ENCODE measurements at regions of chr17 and their contacts with region 1.

Region 1: GRCh38 chr17:3738562-3739295 is 15.0 kb downstream of the HASPIN start:
- DNase-seq: peak; percentile 60
- H3K4me3 Mint-ChIP-seq: no peak overlapping the region
- H3K27ac Mint-ChIP-seq: peak overlapping the region; percentile 33
- H3K4me1 Mint-ChIP-seq: peaks cover 40% of the 10 kb centered on the region
- H3K27me3 Mint-ChIP-seq: no peaks in the 10 kb centered on the region

Region 2: DNA sequence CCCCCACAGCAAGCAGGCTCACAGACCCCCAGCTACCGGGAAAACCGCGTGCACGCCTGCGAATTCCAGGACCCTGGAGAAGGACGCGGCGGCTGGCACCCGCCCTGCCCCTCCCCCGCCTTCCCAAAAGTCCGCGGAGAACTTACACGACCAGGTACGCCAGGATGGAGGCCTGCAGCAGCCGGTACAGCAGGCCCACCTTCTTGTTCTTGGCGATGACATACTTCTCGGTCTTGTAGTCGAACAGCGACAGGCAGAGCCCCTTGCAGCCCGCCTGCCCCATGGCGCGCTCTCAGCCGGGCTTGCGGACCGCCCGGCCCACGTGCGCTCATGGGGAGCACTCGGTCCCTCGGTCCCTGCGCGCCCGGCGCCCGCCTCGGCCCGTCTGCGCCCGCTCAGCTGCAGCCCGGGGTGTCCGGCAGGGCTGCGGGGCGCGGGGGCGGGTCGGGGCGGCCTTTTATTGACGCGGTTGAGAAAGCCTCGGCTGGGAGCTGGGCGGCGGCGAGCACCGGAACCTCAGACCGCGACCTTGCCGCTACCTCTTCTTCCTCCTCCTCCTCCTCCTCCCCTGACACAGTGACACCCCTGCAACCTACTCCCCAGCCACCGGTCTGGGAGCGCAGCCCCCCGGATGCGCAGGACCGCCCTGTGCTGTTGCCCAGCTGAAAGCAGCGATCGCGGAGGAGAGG is 42.9 kb before region 1 on chr17 and contains the start of gene P2RX5:
- CTCF ChIA-PET with region 1: interaction called, 21 read pairs
- POLR2A ChIA-PET with region 1: no interaction called
- DNase-seq: peak; percentile 55
- H3K4me3 Mint-ChIP-seq: peak within 1 kb of the TSS; percentile 85
- H3K27ac Mint-ChIP-seq: peak within 1 kb of the TSS; percentile 91
- H3K4me1 Mint-ChIP-seq: peaks cover 33% of the 10 kb centered on the region
- H3K27me3 Mint-ChIP-seq: no peaks in the 10 kb centered on the region
- total RNA-seq, gene P2RX5: 33.6 to 39.4 TPM

Region 3: DNA sequence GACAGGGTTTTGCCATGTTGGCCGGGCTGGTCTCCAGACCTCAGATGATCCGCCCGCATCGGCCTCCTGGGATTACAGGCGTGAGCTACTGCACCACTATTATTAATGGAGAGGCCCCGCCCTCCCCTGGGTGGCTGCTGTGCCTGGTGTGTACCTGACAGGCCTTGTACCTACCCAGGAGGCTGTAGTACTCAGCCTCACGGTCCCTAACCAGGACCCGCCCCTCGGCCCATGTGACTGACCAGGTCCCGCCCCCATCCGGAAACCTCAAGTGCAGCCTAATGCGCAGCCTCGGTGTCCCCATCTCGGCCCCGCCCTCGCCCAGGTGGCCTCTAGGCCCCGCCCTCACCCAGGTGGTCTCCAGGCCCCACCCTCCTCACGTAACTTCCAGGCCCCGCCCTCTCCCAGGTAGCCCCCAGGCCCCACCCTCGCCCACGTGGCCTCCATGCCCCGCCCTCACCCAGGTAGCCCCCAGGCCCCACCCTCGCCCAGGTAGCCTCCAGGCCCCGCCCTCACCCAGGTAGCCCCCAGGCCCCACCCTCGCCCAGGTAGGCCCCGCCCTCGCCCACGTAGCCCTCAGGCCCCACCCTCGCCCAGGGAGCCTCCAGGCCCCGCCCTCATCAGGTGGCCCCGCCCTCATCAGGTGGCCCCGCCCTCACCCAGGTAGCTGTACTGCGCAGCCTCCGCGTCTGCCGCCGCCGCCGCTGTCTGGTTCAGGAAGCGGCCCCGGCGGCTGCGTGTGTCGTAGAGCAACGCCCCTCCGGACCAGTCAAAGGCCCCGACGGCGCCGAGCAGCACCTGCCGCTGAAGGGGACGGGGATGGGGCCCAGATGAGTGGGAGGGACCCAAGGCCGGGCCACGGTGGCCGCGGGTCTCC is 16.0 kb after region 1 on chr17:
- CTCF ChIA-PET with region 1: interaction called, 42 read pairs
- POLR2A ChIA-PET with region 1: interaction called, 3 read pairs
- DNase-seq: peak; percentile 67
- H3K4me3 Mint-ChIP-seq: no peak overlapping the region
- H3K27ac Mint-ChIP-seq: no peak overlapping the region
- H3K4me1 Mint-ChIP-seq: peaks cover 39% of the 10 kb centered on the region
- H3K27me3 Mint-ChIP-seq: no peaks in the 10 kb centered on the region

Region 4: GRCh38 chr17:3796110-3796821 is 57.5 kb after region 1 on chr17:
- CTCF ChIA-PET with region 1: interaction called, 10 read pairs
- POLR2A ChIA-PET with region 1: interaction called, 3 read pairs
- DNase-seq: peak; percentile 67
- H3K4me3 Mint-ChIP-seq: no peak overlapping the region
- H3K27ac Mint-ChIP-seq: peak overlapping the region; percentile 27
- H3K4me1 Mint-ChIP-seq: peaks cover 35% of the 10 kb centered on the region
- H3K27me3 Mint-ChIP-seq: no peaks in the 10 kb centered on the region

Region 5: GRCh38 chr17:3827124-3827773 is 88.5 kb after region 1 on chr17:
- CTCF ChIA-PET with region 1: interaction called, 82 read pairs
- POLR2A ChIA-PET with region 1: no interaction called
- DNase-seq: peak; percentile 81
- H3K4me3 Mint-ChIP-seq: no peak overlapping the region
- H3K27ac Mint-ChIP-seq: no peak overlapping the region
- H3K4me1 Mint-ChIP-seq: peaks cover 5% of the 10 kb centered on the region
- H3K27me3 Mint-ChIP-seq: no peaks in the 10 kb centered on the region

Region 6: GRCh38 chr17:3870871-3871306 is 132.2 kb after region 1 on chr17:
- CTCF ChIA-PET with region 1: no interaction called
- POLR2A ChIA-PET with region 1: no interaction called
- DNase-seq: peak; percentile 42
- H3K4me3 Mint-ChIP-seq: peak overlapping the region; percentile 9
- H3K27ac Mint-ChIP-seq: peak overlapping the region; percentile 97
- H3K4me1 Mint-ChIP-seq: peaks cover 10% of the 10 kb centered on the region
- H3K27me3 Mint-ChIP-seq: no peaks in the 10 kb centered on the region

Region 7: DNA sequence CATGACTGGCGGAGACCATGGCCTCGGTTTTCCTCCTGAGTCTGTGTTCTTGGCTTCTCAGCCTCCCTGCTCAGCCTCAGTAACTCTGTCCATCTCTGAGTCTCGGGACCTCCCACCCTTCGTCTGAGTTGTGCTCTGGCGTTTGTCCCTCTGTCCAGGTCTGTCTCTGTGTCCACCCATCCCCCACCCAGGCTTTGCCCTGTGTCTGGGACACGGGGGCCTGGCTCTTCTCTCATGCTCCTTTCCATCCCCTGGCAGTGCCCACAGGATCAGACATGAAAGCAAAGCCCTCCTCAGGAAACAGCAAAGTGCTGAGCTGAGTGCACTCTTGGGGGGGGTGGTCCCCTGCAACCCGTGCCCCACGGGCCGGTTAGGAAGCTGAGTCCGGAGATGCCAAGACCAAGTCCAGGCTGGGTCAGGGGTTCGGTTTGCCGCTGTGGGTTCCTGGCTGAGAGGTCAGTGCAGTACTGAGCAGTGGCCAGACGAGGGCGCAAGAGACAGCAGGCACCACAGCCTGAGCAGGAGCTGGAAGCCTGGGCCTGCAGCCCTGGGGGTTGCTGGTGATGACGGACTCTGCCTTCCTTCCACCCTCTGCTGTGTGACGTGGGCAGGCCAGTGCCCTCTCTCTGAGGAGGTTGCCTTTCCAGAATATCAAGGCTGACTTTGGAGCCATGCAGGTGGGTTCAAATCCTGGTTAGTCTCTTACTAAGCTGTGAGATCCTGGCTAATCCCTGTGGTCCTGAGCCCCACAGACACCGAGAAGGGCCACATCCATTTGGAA is 175.0 kb after region 1 on chr17:
- CTCF ChIA-PET with region 1: interaction called, 11 read pairs
- POLR2A ChIA-PET with region 1: no interaction called
- DNase-seq: peak; percentile 82
- H3K4me3 Mint-ChIP-seq: no peak overlapping the region
- H3K27ac Mint-ChIP-seq: peak overlapping the region; percentile 10
- H3K4me1 Mint-ChIP-seq: peaks cover 48% of the 10 kb centered on the region
- H3K27me3 Mint-ChIP-seq: no peaks in the 10 kb centered on the region

Measured in activated CD4-positive, alpha-beta T cell treated with anti-CD3 and anti-CD28 coated beads, Interleukin-2, amount 10 ng/mL, durations not matched to agents 7 days and 5 days (primary cell).